Activated CD4-positive, alpha-beta T cell treated with anti-CD3 and anti-CD28 coated beads for 36 hours (primary cell): ENCODE measurements at regions of chr12 and their contacts with region 1.

Region 1: GRCh38 chr12:120649442-120650232 is 9.2 kb downstream of the CABP1 start:
- DNase-seq: peak; percentile 35
- ATAC-seq: peak; percentile 8
- H3K4me3 Mint-ChIP-seq: peak overlapping the region; percentile 37
- H3K27ac Mint-ChIP-seq: no peak overlapping the region
- H3K4me1 Mint-ChIP-seq: peaks cover 15% of the 10 kb centered on the region
- H3K27me3 Mint-ChIP-seq: peaks cover 48% of the 10 kb centered on the region

Region 2: DNA sequence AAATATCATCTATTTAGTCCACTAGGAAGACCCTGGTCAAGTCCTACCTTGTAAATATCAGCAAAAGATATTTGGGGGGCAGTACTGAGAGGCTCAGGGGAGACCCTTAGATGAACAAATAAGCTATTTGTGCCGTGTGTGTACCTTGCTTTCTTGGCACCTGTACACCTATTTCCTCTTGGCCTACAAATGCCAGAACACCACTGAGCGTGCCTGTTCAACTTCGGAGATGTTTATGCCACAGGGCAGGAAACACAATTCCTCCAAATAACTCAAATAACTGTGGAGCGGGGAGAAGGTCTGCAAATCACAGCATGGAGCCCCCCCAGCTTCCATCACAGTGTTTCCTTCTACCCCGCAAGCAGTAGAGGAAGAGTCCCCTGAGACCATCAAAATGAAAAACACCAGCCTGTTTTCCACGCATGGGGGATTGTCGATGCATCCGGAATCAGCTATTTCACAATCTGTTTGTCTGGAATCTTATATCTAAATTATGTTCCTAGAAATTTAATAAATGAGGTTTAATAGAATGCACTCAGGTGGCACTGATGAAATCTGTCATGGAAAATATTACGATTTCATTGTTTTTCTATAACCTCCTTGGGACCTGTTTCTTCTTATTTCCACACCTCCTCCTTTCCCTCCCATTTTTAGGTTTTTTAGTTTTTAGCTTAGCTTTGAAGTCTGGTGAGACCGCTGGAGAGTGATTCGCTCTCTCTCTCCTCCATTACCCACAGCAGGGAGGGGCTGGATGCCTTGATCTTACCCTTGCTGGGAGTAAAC is 1922.2 kb before region 1 on chr12:
- CTCF ChIA-PET with region 1: no interaction called
- POLR2A ChIA-PET with region 1: no interaction called
- intact Hi-C with region 1: no loop called
- DNase-seq: no peak
- ATAC-seq: no peak
- H3K4me3 Mint-ChIP-seq: no peak overlapping the region
- H3K27ac Mint-ChIP-seq: no peak overlapping the region
- H3K4me1 Mint-ChIP-seq: no peaks in the 10 kb centered on the region
- H3K27me3 Mint-ChIP-seq: no peaks in the 10 kb centered on the region

Region 3: GRCh38 chr12:120534203-120534702 is 115.4 kb before region 1 on chr12 and contains the start of gene RNF10:
- CTCF ChIA-PET with region 1: no interaction called
- POLR2A ChIA-PET with region 1: no interaction called
- intact Hi-C with region 1: no loop called
- DNase-seq: peak; percentile 82
- ATAC-seq: peak; percentile 67
- H3K4me3 Mint-ChIP-seq: peak within 1 kb of the TSS; percentile 87
- H3K27ac Mint-ChIP-seq: peak within 1 kb of the TSS; percentile 95
- H3K4me1 Mint-ChIP-seq: peaks cover 46% of the 10 kb centered on the region
- H3K27me3 Mint-ChIP-seq: no peaks in the 10 kb centered on the region
- total RNA-seq, gene RNF10: 177 to 184 TPM

Region 4: GRCh38 chr12:120625557-120626419 is 23.8 kb before region 1 on chr12:
- CTCF ChIA-PET with region 1: interaction called, 13 read pairs
- POLR2A ChIA-PET with region 1: no interaction called
- intact Hi-C with region 1: no loop called
- DNase-seq: peak; percentile 67
- ATAC-seq: peak; percentile 80
- H3K4me3 Mint-ChIP-seq: no peak overlapping the region
- H3K27ac Mint-ChIP-seq: no peak overlapping the region
- H3K4me1 Mint-ChIP-seq: no peaks in the 10 kb centered on the region
- H3K27me3 Mint-ChIP-seq: peaks cover under 1% of the 10 kb centered on the region

Region 5: GRCh38 chr12:120677765-120678473 is 28.3 kb after region 1 on chr12:
- CTCF ChIA-PET with region 1: interaction called, 18 read pairs
- POLR2A ChIA-PET with region 1: no interaction called
- intact Hi-C with region 1: no loop called
- DNase-seq: peak; percentile 47
- ATAC-seq: peak; percentile 85
- H3K4me3 Mint-ChIP-seq: no peak overlapping the region
- H3K27ac Mint-ChIP-seq: peak overlapping the region; percentile 70
- H3K4me1 Mint-ChIP-seq: peaks cover 12% of the 10 kb centered on the region
- H3K27me3 Mint-ChIP-seq: peaks cover 3% of the 10 kb centered on the region

Region 6: DNA sequence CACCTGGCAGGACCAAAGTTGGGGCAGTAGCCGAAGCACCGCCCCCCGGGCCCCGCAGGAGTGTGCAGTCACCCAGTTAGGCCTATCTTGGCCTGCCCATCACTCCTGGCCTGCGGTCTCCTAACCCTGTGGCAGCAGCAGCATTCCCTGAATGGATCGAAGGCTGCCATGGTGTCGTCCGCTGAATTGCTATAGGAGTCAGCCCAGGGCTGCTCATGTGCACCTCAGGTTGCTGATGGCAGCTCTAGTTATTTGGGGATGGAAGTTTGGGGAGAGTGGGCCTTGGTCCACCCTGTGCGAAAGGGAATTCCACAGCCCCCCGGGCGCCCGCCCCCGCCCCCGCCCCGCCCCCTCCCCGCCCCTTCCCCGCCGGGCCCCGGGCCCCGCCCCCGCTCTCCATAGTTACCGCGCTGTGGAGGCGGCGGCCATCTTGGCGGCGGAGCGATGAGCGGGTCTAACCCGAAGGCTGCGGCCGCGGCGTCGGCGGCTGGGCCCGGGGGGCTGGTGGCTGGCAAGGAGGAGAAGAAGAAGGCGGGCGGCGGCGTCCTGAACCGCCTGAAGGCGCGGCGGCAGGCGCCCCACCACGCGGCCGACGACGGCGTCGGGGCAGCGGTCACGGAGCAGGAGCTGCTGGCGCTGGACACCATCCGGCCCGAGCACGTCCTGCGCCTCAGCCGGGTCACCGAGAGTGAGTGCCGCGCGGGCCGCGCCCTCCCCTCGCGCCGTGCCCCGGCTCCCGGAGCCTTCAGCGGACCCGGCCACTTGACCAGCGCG is 60.6 kb after region 1 on chr12 and contains the start of gene UNC119B:
- CTCF ChIA-PET with region 1: interaction called, 14 read pairs
- POLR2A ChIA-PET with region 1: no interaction called
- intact Hi-C with region 1: loop called (anchors 1 kb)
- DNase-seq: peak; percentile 83
- ATAC-seq: peak; percentile 78
- H3K4me3 Mint-ChIP-seq: peak within 1 kb of the TSS; percentile 86
- H3K27ac Mint-ChIP-seq: peak within 1 kb of the TSS; percentile 82
- H3K4me1 Mint-ChIP-seq: peaks cover 34% of the 10 kb centered on the region
- H3K27me3 Mint-ChIP-seq: no peaks in the 10 kb centered on the region
- total RNA-seq, gene UNC119B: 20.1 to 26.6 TPM

Region 7: GRCh38 chr12:121590476-121591143 is 941.0 kb after region 1 on chr12:
- CTCF ChIA-PET with region 1: no interaction called
- POLR2A ChIA-PET with region 1: no interaction called
- intact Hi-C with region 1: no loop called
- DNase-seq: peak; percentile 79
- ATAC-seq: peak; percentile 82
- H3K4me3 Mint-ChIP-seq: peak overlapping the region; percentile 75
- H3K27ac Mint-ChIP-seq: peak overlapping the region; percentile 98
- H3K4me1 Mint-ChIP-seq: peaks cover 32% of the 10 kb centered on the region
- H3K27me3 Mint-ChIP-seq: no peaks in the 10 kb centered on the region